ENCODE measurements at regions of chr10 and their contacts with region 1.

Region 1: DNA sequence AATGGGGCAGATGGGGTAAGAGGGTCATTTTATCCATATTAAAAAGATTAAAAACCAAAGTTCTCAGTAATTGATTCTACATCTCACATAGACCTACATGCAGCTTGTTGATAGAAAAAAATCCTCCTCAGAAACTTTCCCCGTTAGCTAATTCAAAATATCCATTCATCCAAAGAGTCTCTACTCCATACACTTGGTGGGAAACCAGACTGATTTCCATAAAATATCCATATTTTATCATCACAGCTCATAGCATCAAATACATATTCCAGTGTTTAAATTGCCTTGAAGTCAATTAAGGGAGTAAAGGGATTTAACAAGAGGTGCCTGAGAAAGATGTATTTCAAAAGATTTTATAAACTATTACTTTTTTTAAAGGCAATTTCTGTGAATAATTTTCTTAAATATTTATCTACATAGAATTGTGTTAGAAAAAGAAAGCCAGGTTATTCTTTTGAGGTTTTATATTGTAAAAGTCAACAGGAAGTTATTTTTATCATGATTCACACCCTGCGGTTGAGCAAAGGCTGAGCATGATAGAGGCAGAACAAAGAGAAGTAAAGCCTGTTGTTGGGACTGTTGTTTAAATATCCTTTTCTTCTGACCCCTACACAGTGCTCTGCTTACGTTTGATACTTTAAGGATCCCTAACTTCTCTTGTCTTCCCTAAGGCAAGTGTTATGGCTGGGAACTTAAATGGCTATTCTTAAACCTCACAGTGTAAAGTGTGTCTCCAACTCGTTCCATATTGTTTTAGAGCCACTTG is 266.7 kb downstream of the PRKG1 start:
- DNase-seq: no peak
- ATAC-seq: no peak
- H3K4me3 ChIP-seq: no peak overlapping the region
- H3K27ac ChIP-seq: no peak overlapping the region
- H3K4me1 ChIP-seq: peaks cover 0 to 6% (median 0%) of the 10 kb centered on the region in 12 donors
- H3K27me3 ChIP-seq: no peaks in the 10 kb centered on the region
- CTCF ChIP-seq: no peak
- POLR2A ChIP-seq: no peak

Region 2: DNA sequence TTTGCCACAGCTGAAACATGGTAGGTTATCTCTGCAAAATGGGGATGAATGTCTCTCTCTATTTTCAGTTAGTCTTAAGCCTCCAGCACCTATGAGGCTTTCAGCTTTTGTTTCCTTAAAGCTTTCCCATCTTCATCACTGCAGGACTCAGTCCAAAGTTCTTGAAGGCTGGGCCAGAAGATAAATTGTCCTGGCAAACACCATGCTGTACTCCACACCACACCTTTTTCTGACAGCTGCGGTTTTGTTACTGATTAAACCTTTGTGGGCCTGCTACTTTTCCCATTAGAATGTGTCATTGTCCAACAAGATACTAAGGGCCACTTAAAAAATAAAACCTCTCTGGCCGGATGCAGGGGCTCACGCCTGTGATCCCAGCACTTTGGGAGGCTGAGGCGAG is 368.4 kb before region 1 on chr10:
- intact Hi-C with region 1: no loop called
- DNase-seq: no peak
- ATAC-seq: no peak
- H3K4me3 ChIP-seq: no peak overlapping the region
- H3K27ac ChIP-seq: no peak overlapping the region
- H3K4me1 ChIP-seq: peaks cover 0 to 6% (median 0%) of the 10 kb centered on the region in 12 donors
- H3K27me3 ChIP-seq: no peaks in the 10 kb centered on the region
- CTCF ChIP-seq: no peak
- POLR2A ChIP-seq: no peak

Region 3: GRCh38 chr10:51319173-51319435 is 21.9 kb before region 1 on chr10:
- intact Hi-C with region 1: loop called in 1 of 10 experiments (anchors 2 kb)
- DNase-seq: no peak
- ATAC-seq: no peak
- H3K4me3 ChIP-seq: no peak overlapping the region
- H3K27ac ChIP-seq: no peak overlapping the region
- H3K4me1 ChIP-seq: peaks cover 0 to 30% (median 3%) of the 10 kb centered on the region in 12 donors
- H3K27me3 ChIP-seq: no peaks in the 10 kb centered on the region
- CTCF ChIP-seq: no peak
- POLR2A ChIP-seq: no peak

Measured in heart left ventricle (tissue), 16 donors.